ENCODE measurements at regions of chr3 and their contacts with region 1.

Region 1: DNA sequence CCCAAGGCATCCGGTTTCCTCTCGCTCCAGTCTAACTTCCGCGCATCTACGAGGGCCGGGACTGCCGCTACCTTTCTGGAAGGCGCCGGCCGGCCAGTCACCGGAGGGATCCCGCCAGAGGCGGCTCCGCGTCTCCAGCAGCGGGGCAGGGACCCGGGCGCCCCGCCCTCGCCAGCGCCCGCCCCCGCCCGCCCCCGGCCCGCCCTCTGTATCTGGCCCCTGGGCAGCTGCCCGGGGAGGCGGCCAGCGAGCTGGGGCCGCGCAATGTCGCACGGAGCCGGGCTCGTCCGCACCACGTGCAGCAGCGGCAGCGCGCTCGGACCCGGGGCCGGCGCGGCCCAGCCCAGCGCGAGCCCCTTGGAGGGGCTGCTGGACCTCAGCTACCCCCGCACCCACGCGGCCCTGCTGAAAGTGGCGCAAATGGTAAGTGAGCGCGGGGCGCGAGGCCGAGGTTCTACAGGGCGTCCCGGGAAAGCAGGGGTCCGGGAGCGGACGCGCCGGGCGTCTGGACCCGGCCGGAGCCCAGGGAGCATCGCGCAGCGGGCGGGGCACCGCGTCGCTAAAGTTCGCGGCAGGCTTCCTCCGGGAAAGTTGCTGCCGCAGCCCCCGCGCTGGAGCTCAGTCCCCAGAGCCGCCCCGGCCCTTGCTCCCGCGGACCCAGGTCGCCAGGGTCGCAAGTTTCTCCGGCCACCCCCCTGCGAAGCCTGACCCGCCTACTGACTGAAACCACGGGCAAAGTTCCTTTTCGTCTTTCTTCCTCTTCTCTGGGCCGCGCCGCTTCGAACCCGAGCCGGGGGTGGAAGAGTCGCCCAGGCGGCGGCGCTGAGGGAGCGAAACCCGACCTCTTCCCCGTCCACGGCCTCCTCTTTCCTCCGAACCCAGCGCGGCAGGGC is at the start of gene CMTM7:
- DNase-seq: peak; percentile 92
- H3K4me3 Mint-ChIP-seq: peak within 1 kb of the TSS; percentile 90
- H3K27ac Mint-ChIP-seq: peak within 1 kb of the TSS; percentile 99
- H3K4me1 Mint-ChIP-seq: peaks cover 46% of the 10 kb centered on the region
- H3K27me3 Mint-ChIP-seq: no peaks in the 10 kb centered on the region
- total RNA-seq, gene CMTM7: 45.0 and 46.3 TPM in 2 replicates

Region 2: DNA sequence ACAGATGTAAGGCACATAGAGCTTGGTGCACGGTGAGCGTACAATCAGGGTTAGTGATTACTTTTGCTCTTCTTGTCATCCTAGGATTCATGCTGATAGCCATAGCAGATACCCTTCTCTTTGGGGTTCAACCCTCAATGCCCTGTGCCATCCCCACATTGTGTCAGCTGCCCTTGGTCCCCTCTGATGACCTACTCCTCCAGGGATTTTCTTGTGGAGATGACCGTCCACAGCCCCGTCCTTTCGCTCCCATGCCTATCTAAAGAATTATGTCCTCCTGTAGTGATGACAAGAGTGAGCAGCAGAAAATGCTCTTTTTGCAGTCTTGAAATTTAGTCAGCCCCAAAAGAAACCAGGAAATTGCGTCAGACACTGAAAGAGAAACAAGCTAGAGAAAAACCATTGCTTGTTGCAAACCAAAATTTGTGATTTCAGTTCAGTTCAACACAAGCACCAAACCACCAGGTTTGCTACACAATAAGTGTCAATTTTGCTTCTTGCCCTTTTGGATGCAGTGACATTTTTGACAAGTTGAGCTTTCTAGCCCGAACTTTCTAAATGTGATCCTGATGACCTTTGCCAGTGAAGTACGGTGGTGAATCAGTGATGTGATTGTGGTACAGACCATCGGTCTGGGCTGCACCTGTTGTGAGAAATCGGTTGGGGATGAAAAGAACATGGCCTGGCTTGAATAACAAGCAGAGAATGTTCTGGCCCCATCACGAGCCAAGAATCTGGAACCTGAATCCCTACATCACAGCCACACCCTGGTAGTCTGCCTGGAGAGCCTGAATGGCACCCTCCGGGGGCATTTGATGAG is 41.0 kb after region 1 on chr3:
- intact Hi-C with region 1: loop called (anchors 2 kb)
- DNase-seq: peak; percentile 87
- H3K4me3 Mint-ChIP-seq: peak overlapping the region; percentile 70
- H3K27ac Mint-ChIP-seq: peak overlapping the region; percentile 95
- H3K4me1 Mint-ChIP-seq: peaks cover 73% of the 10 kb centered on the region
- H3K27me3 Mint-ChIP-seq: no peaks in the 10 kb centered on the region

Region 3: DNA sequence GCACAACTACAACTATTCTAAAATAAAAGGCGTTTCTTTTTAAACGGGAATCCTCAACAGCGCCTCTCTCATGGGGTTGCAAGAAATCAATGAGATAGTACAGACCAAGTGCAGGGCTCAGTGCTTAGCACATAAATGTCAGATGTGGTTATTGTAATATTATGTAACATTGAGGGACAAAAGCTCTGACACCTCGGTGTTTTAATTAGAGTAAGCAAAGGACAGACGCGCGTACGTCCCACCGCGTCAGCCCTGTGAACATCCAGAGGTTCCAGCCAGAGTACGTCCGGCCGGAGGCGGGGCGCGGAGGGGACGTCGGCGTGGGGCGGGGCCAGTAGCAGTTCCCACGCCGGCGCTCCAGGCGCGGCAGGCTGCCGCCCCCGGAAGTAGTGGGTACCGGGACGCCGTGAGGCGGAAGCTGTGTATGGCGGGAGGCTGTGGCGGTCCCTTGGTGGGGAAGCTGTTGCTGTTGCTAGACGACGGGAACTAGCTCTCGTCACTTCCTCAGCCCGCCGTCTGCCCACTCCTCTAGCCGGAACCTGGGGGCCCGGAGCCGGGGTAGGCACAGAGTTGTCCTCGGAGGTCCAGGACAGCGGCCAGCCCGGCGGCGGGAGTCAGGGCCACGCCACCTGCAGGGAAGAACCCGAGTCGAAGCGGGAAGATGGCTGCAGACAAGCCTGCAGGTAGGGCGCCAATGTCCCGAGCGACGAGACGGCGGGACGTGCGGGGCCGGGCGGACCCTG is 293.1 kb after region 1 on chr3 and contains the start of gene CNOT10:
- intact Hi-C with region 1: loop called (anchors 5 kb)
- DNase-seq: peak; percentile 99
- H3K4me3 Mint-ChIP-seq: peak within 1 kb of the TSS; percentile 95
- H3K27ac Mint-ChIP-seq: peak within 1 kb of the TSS; percentile 96
- H3K4me1 Mint-ChIP-seq: peaks cover 27% of the 10 kb centered on the region
- H3K27me3 Mint-ChIP-seq: no peaks in the 10 kb centered on the region
- total RNA-seq, gene CNOT10: 61.0 and 74.4 TPM in 2 replicates

Measured in activated CD4-positive, alpha-beta T cell treated with anti-CD3 and anti-CD28 coated beads, Interleukin-2, amount 10 ng/mL, durations not matched to agents 24 days and 14 days (primary cell).